GM23248 (cell line): ENCODE measurements at regions of chr4 and their contacts with region 1.

Region 1: GRCh38 chr4:186587416-186588018 is 32.1 kb upstream of the MTNR1A start:
- DNase-seq: peak; percentile 70
- H3K4me3 ChIP-seq: no peak overlapping the region
- H3K27ac ChIP-seq: no peak overlapping the region
- H3K4me1 ChIP-seq: no peaks in the 10 kb centered on the region
- H3K27me3 ChIP-seq: no peaks in the 10 kb centered on the region

Region 2: GRCh38 chr4:185865901-185866328 is 721.6 kb before region 1 on chr4:
- in situ Hi-C with region 1: no loop called
- DNase-seq: peak; percentile 43
- H3K4me3 ChIP-seq: no peak overlapping the region
- H3K27ac ChIP-seq: no peak overlapping the region
- H3K4me1 ChIP-seq: peaks cover 9% of the 10 kb centered on the region; the same call in 1 of the 2 replicates
- H3K27me3 ChIP-seq: no peaks in the 10 kb centered on the region; the same call in 1 of the 2 replicates

Region 3: GRCh38 chr4:186297013-186297645 is 290.4 kb before region 1 on chr4:
- in situ Hi-C with region 1: loop called (anchors 10 kb)
- DNase-seq: peak; percentile 60
- H3K4me3 ChIP-seq: no peak overlapping the region
- H3K27ac ChIP-seq: no peak overlapping the region
- H3K4me1 ChIP-seq: no peaks in the 10 kb centered on the region
- H3K27me3 ChIP-seq: peaks cover 30% of the 10 kb centered on the region

Region 4: DNA sequence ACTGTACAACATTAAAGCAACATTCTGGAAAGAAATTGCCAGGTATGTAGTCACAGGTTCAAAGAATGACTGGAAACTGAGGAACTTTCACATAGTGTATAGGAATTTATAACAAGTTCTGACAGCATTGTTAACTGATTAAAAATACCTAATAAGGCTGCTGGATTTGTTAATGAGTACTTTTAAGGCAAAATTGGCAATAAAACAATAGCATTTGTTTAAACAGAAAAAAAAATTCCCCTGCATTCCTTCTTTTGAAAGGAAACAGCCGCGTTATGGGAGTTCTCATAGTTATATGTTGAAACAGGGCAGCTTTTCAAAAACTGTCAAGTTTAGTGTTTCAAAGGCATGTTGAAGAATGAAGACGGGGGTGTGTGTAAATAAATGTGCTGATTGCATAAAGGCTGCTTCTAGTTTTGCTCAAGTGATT is 418.7 kb after region 1 on chr4:
- in situ Hi-C with region 1: no loop called
- DNase-seq: peak; percentile 15
- H3K4me3 ChIP-seq: no peak overlapping the region
- H3K27ac ChIP-seq: no peak overlapping the region
- H3K4me1 ChIP-seq: no peaks in the 10 kb centered on the region
- H3K27me3 ChIP-seq: 0 out of 2 replicates have a peak, but pooled peaks cover 5% of the 10 kb centered on the region

Region 5: DNA sequence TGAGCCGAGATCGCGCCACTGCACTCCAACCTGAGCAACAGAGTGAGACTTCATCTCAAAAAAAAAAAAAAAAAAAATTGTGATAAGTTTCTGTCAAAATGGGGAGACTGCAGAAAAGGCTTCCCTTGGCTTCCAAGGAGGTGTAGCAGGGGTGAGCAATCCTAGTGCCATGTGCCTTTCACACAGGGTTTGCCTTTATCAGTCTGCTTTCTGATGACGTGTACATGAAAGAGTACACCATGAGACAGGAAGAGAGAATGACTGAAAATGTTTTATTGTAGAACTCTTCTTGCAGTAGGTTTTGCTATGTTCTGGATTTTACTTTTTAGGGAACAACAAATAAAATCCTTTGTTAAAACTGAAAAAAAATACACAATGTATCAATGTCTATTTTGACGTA is 1384.6 kb after region 1 on chr4:
- in situ Hi-C with region 1: no loop called
- DNase-seq: no peak
- H3K4me3 ChIP-seq: no peak overlapping the region
- H3K27ac ChIP-seq: no peak overlapping the region
- H3K4me1 ChIP-seq: no peaks in the 10 kb centered on the region
- H3K27me3 ChIP-seq: no peaks in the 10 kb centered on the region